ENCODE measurements at regions of chr2 and their contacts with region 1.

Region 1: DNA sequence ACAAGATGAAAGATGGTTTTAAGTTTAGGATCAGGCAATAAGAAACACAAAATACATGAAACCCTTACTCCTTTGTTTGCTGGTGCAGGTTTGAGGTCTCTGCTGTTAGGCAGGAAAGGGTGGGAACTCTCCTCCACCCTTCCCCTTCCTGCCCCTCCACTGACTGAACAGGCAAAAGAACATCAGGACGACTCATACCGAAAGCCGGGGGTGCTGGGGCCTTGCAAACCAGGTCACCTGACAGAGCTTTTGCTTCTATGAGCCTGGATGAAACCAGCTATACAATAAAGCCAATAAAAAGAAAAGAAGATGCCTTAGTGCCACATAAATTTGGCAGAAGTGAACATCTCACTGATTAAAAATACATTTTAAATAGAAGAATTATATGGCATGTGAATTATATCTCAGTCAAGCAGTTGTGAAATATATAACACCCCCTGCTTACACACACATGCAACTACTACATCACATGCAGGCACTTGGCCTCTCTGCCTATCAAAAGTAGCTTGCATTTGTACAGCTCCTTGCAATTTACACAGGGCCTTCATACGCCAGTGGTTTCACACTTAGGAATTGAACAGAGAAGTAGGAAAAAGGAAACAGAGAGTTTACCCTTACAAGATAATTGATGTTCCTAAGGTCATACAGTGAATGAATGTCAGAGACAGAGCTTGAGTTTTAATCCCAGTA is 215.1 kb upstream of the TRIB2 start:
- DNase-seq: peak; percentile 87
- ATAC-seq: peak; percentile 77
- H3K4me3 Mint-ChIP-seq: no peak overlapping the region
- H3K27ac Mint-ChIP-seq: peak overlapping the region; percentile 62
- H3K4me1 Mint-ChIP-seq: peaks cover 94% of the 10 kb centered on the region
- H3K27me3 Mint-ChIP-seq: no peaks in the 10 kb centered on the region

Region 2: DNA sequence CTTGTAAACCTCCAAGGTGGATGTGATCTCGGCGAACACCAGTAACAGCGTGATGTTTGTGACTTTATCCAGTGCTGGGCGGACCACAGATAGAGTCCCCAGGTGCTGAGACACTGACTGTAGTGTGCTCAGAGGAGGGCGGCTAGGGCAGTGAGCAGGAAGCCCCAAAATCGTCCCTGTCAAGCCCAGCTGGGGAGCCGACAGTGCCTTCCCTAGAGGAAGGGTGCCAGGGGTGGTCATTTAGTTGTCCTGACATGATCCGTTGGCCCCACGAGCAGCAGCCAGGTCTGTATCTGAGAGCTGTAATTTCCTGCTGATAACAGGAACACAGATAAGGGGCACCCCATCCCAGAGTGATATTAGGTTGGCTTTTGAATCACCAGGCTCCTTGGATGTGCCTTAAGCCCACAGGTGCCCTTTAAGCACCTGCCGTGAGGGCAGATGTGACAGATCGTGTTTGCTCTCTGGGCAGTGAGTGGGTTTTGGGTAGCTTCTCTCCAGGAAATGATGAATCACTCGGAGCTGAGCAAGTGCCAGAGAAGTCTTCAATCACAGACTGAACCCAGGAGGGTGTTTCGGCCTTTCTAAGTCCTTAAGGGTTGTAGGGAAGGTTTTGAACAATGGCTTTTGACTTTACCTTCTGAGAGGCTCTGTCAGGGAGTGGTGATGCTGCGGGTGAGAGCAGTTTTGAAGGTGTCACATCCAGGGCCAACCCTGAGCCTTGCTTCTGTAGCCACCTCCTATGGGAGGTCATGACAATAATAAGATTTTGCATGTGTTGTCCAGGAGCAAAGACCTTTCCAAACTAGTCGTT is 747.5 kb before region 1 on chr2:
- CTCF ChIA-PET with region 1: no interaction called
- POLR2A ChIA-PET with region 1: no interaction called
- intact Hi-C with region 1: loop called (anchors 5 kb)
- DNase-seq: peak; percentile 84
- ATAC-seq: peak; percentile 75
- H3K4me3 Mint-ChIP-seq: peak overlapping the region; percentile 75
- H3K27ac Mint-ChIP-seq: peak overlapping the region; percentile 98
- H3K4me1 Mint-ChIP-seq: peaks cover 91% of the 10 kb centered on the region
- H3K27me3 Mint-ChIP-seq: no peaks in the 10 kb centered on the region

Region 3: GRCh38 chr2:12456293-12457151 is 45.1 kb before region 1 on chr2:
- CTCF ChIA-PET with region 1: interaction called, 3 read pairs
- POLR2A ChIA-PET with region 1: no interaction called
- intact Hi-C with region 1: loop called (anchors 5 kb)
- DNase-seq: peak; percentile 63
- ATAC-seq: peak; percentile 83
- H3K4me3 Mint-ChIP-seq: peak overlapping the region; percentile 56
- H3K27ac Mint-ChIP-seq: peak overlapping the region; percentile 81
- H3K4me1 Mint-ChIP-seq: peaks cover 31% of the 10 kb centered on the region
- H3K27me3 Mint-ChIP-seq: no peaks in the 10 kb centered on the region

Region 4: GRCh38 chr2:12555012-12555645 is 53.5 kb after region 1 on chr2:
- CTCF ChIA-PET with region 1: no interaction called
- POLR2A ChIA-PET with region 1: no interaction called
- intact Hi-C with region 1: loop called (anchors 2 to 5 kb)
- DNase-seq: peak; percentile 55
- ATAC-seq: peak; percentile 92
- H3K4me3 Mint-ChIP-seq: peak overlapping the region; percentile 33
- H3K27ac Mint-ChIP-seq: peak overlapping the region; percentile 75
- H3K4me1 Mint-ChIP-seq: peaks cover 36% of the 10 kb centered on the region
- H3K27me3 Mint-ChIP-seq: no peaks in the 10 kb centered on the region

Region 5: GRCh38 chr2:12702305-12703121 is 200.9 kb after region 1 on chr2:
- CTCF ChIA-PET with region 1: no interaction called
- POLR2A ChIA-PET with region 1: no interaction called
- intact Hi-C with region 1: loop called in 1 of 2 experiments (anchors 5 kb)
- DNase-seq: no peak
- ATAC-seq: peak; percentile 86
- H3K4me3 Mint-ChIP-seq: no peak overlapping the region
- H3K27ac Mint-ChIP-seq: no peak overlapping the region
- H3K4me1 Mint-ChIP-seq: peaks cover 37% of the 10 kb centered on the region
- H3K27me3 Mint-ChIP-seq: no peaks in the 10 kb centered on the region

Measured in activated CD4-positive, alpha-beta T cell treated with anti-CD3 and anti-CD28 coated beads for 36 hours (primary cell).